ENCODE measurements at regions of chr7 and their contacts with region 1.

Region 1: DNA sequence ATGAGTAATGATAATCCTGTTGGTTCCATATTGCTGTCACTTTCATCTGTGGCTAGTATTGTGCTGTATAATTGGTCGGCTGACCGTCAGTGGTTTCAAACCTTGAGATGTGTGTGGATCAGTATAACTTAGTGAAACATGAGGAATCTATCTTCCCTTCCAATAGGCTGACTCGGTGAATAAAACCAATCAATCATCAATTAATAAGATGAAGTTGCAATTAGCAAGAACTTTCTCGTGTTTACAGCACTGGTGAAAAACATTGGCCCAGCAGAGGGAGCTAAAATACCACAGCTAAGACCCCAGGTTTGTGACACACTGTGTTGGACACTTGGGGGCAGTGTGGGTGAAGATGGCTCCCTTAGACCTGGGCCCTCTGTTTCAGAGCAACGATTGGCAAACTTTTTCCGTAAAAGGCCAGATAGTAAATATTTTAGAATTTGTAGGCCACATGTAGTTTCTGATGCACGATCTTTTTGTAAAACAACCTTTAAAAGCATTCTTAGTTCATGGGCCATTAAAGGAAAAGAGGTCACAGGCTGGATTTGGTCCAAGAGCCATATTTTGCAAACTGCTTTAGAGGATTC is 47.8 kb downstream of the STRA8 start:
- DNase-seq: peak; percentile 67
- H3K4me3 Mint-ChIP-seq: no peak overlapping the region
- H3K27ac Mint-ChIP-seq: no peak overlapping the region
- H3K4me1 Mint-ChIP-seq: peaks cover 15% of the 10 kb centered on the region
- H3K27me3 Mint-ChIP-seq: peaks cover 10% of the 10 kb centered on the region

Region 2: GRCh38 chr7:135262623-135263315 is 18.7 kb before region 1 on chr7:
- intact Hi-C with region 1: no loop called
- DNase-seq: no peak
- H3K4me3 Mint-ChIP-seq: no peak overlapping the region
- H3K27ac Mint-ChIP-seq: no peak overlapping the region
- H3K4me1 Mint-ChIP-seq: no peaks in the 10 kb centered on the region
- H3K27me3 Mint-ChIP-seq: no peaks in the 10 kb centered on the region

Region 3: DNA sequence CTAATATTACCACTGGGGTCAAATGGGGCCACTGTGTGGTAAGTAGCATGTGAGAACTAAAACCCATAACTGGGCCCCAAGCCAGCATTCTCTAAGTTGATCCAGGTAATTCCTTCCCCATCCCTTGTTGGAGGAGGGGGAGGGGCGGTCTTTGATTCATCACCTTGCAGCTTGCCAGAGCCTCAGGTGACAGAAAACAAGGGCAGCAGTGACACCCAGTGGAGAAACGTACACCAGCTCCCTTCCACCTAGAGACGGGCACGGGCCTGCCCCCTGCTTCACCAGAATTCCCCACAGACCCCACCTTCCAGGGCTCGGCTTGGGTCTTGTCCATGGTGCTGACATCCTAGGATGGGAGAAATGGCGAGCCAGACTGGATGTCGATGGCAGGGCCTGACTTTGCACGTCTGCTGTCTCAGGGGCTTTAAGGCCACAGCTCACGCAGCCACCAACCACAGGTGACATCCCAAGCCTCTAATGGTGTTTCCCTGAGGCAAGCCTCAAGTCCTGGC is 54.2 kb after region 1 on chr7:
- intact Hi-C with region 1: loop called (anchors 2 kb)
- DNase-seq: no peak
- H3K4me3 Mint-ChIP-seq: no peak overlapping the region
- H3K27ac Mint-ChIP-seq: no peak overlapping the region
- H3K4me1 Mint-ChIP-seq: peaks cover 2% of the 10 kb centered on the region
- H3K27me3 Mint-ChIP-seq: no peaks in the 10 kb centered on the region

Region 4: GRCh38 chr7:135558337-135558767 is 276.9 kb after region 1 on chr7:
- intact Hi-C with region 1: loop called (anchors 1 kb)
- DNase-seq: peak; percentile 64
- H3K4me3 Mint-ChIP-seq: no peak overlapping the region
- H3K27ac Mint-ChIP-seq: no peak overlapping the region
- H3K4me1 Mint-ChIP-seq: peaks cover 19% of the 10 kb centered on the region
- H3K27me3 Mint-ChIP-seq: peaks cover 1% of the 10 kb centered on the region

Region 5: GRCh38 chr7:135645296-135645904 is 363.9 kb after region 1 on chr7:
- intact Hi-C with region 1: loop called (anchors 1 kb)
- DNase-seq: no peak
- H3K4me3 Mint-ChIP-seq: no peak overlapping the region
- H3K27ac Mint-ChIP-seq: no peak overlapping the region
- H3K4me1 Mint-ChIP-seq: peaks cover 3% of the 10 kb centered on the region
- H3K27me3 Mint-ChIP-seq: no peaks in the 10 kb centered on the region